ENCODE measurements at regions of chrX and their contacts with region 1.

Region 1: DNA sequence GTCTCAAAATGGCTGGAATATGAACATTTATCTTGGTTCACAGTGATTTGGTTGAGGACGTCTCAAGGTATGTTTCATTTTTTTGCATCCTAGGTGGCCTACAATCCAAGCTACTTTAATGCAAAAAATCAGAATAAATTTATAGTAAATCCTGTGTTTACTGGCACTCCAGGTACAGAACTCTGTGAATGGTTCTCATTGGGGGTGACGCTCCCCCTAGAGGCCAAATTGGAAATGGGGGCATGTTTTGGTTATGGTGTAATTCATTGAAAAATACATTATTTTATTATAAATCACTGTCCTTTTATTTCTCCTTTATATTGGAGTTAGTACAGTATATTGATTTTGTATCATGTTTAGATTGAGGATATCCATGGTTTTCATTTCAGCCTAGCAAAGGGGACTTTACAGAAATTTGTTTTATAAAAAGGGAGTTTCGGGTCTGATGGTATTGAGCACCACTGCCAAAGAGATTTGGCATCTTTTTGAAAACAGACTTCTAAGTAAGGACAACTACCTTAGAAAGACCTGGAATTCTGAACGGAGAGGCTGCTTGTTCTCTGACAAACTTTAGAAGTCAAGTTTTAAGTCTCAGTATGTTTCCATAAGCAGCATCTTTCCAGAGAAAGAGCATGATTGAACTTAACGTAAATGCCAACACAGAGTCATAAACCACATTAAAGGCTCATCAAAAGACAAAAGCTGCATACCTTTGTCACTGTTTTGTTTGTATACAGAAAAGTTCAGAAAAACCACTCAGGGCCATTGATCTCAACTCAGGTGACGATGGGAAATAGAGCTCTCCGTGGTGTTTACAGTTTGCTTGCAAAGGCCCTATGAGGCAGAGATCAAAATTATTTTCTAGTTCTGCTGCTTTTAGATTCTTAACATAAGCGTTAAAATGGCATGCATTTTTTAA is 19.4 kb downstream of the MTM1 start:
- DNase-seq: peak in 1 of 2 experiments; percentile 44
- H3K4me3 ChIP-seq: no peak overlapping the region
- H3K27ac ChIP-seq: no peak overlapping the region
- H3K4me1 ChIP-seq: no peaks in the 10 kb centered on the region
- H3K27me3 ChIP-seq: no peaks in the 10 kb centered on the region
- CTCF ChIP-seq: peak; percentile 94

Region 2: DNA sequence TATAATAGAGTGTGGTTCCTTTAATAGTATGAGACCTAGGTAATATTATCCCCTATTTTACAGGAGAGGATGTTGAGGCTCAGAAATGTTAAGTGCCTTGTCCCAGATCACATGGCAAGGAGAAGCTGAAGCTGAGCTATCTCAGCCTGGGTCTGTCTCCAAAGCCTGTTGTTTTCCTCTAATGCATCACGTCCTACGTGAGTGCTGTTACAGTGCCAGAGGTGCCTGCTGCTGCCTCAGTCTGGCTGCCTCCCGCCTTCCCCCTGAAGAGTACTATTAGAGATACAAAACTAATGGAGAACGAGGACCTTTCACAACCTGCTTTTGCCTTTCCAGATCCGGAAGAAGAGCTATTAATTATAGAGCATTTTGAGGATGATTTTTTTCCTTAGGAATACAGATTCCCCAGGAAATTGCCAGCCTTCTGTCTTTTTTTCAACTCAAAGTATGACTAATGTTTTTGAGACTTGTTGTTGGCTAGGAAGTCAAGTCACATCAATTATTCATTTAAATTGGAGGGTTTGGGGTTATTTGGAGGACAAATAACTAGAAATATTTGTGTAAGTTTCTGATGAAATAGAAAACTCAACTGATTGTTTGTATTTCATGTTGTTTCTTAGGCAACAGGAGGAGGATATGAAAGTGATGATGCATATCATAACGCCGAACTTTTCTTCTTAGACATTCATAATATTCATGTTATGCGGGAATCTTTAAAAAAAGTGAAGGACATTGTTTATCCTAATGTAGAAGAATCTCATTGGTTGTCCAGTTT is 61.4 kb after region 1 on chrX:
- CTCF ChIA-PET with region 1: no interaction called
- POLR2A ChIA-PET with region 1: no interaction called
- intact Hi-C with region 1: loop called (anchors 10 kb)
- DNase-seq: no peak
- H3K4me3 ChIP-seq: no peak overlapping the region
- H3K27ac ChIP-seq: no peak overlapping the region
- H3K4me1 ChIP-seq: no peaks in the 10 kb centered on the region
- H3K27me3 ChIP-seq: no peaks in the 10 kb centered on the region
- CTCF ChIP-seq: no peak